ENCODE measurements at regions of chr5 and their contacts with region 1.

Region 1: GRCh38 chr5:173781814-173782670 is 106.1 kb upstream of the CPEB4 start:
- DNase-seq: peak; percentile 78 to 94
- H3K4me3 ChIP-seq: no peak overlapping the region
- H3K27ac ChIP-seq: peak overlapping the region; percentile 65 to 72
- H3K4me1 ChIP-seq: peaks cover 4 to 16% of the 10 kb centered on the region in 2 donors
- H3K27me3 ChIP-seq: no peaks in the 10 kb centered on the region
- CTCF ChIP-seq: no peak

Region 2: GRCh38 chr5:173507171-173507570 is 274.9 kb before region 1 on chr5:
- intact Hi-C with region 1: no loop called
- DNase-seq: no peak
- H3K4me3 ChIP-seq: no peak overlapping the region
- H3K27ac ChIP-seq: no peak overlapping the region
- H3K4me1 ChIP-seq: no peaks in the 10 kb centered on the region
- H3K27me3 ChIP-seq: no peaks in the 10 kb centered on the region
- CTCF ChIP-seq: no peak

Region 3: GRCh38 chr5:173859428-173860159 is 77.6 kb after region 1 on chr5:
- intact Hi-C with region 1: loop called (anchors 5 kb)
- DNase-seq: no peak
- H3K4me3 ChIP-seq: no peak overlapping the region
- H3K27ac ChIP-seq: no peak overlapping the region
- H3K4me1 ChIP-seq: peaks cover 3 to 23% of the 10 kb centered on the region in 2 donors
- H3K27me3 ChIP-seq: no peaks in the 10 kb centered on the region
- CTCF ChIP-seq: no peak

Measured in ascending aorta (tissue), 2 donors.